Activated CD4-positive, alpha-beta T cell treated with anti-CD3 and anti-CD28 coated beads for 36 hours (primary cell): ENCODE measurements at regions of chr5 and their contacts with region 1.

Region 1: DNA sequence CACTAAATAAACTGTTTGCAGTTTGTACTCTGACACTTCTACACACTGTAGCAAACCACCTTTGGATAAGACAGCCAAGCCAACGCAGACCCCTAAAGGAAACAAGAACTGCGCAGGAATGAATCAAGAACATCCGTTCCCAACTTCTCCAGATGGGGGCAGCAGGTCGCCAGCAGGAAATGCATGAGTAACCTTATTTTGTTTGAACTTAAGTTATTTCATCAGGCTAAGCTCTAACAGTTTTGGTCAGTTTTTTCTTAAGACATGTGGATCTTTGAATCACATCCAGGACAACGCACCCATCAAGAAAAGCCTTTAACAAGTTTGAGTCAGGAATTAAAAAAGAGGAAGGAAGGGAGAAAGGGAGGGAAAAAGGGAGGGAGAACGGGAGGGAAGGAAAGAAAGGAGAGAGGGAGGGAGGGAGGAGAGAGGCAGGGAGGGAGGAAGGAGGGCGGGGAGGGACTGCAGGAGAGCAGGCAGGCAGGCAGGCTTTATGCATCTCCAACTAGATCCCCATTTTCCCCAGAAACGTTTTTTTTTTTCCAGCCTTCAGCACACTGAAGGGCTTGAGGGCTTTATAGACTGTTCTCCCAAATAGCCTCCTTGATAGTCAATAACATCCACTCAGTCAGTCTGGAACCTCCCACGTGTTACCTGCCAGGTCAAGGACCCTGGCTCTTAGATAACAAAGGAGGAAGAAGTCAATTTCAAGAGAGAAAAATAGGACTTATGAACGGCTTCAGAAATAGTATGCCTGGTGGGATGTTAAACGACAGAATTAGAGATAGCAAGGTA is 22.2 kb downstream of the BHMT start:
- DNase-seq: peak; percentile 85
- ATAC-seq: peak; percentile 92
- H3K4me3 Mint-ChIP-seq: peak overlapping the region; percentile 51
- H3K27ac Mint-ChIP-seq: peak overlapping the region; percentile 95
- H3K4me1 Mint-ChIP-seq: peaks cover 15% of the 10 kb centered on the region
- H3K27me3 Mint-ChIP-seq: peaks cover 3% of the 10 kb centered on the region

Region 2: DNA sequence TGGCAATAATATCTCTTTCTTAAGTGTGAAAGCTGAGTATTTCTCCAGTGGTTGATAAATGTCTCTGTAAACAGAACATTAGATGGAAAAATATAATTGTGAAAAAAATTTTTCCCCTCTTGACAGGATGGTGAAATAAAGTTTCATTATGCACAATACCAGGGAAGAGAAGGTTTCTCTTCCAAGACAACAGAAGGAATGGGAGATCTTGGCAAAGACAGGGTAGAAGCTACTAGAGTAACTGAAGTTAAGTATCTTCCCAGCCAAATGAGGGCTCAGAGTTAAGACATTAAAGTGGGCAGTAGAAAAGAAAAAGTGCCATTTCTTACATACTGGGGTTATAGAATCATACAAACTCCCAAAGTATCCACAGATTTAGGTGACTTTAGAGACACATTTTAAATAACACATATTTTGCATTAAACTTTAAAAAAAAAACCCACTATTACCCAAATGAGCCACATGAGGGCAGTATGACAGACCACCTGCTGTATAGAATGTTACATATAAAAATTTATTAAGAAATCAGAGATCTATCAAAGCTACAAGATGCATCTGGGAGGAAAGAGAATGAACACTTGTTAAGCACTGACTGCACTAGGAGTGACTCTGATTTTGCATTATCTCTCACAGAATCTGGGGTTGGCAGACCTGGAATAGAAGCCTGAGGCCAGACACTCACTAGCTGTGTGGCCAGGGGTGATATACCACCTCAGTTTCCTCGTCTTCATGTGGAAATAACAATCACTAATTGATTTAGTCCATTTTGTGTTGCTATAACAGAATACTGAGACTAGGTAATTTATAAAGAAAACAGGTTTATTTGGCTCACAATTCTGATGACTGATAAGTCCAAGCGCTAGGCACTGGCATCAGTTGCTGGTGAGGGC is 247.3 kb before region 1 on chr5:
- CTCF ChIA-PET with region 1: interaction called, 6 read pairs
- POLR2A ChIA-PET with region 1: no interaction called
- intact Hi-C with region 1: loop called (anchors 5 kb)
- DNase-seq: no peak
- ATAC-seq: no peak
- H3K4me3 Mint-ChIP-seq: no peak overlapping the region
- H3K27ac Mint-ChIP-seq: no peak overlapping the region
- H3K4me1 Mint-ChIP-seq: peaks cover 18% of the 10 kb centered on the region
- H3K27me3 Mint-ChIP-seq: no peaks in the 10 kb centered on the region

Region 3: GRCh38 chr5:79020861-79021561 is 112.8 kb before region 1 on chr5:
- CTCF ChIA-PET with region 1: interaction called, 299 read pairs
- POLR2A ChIA-PET with region 1: no interaction called
- intact Hi-C with region 1: loop called (anchors 1 kb)
- DNase-seq: peak; percentile 70
- ATAC-seq: no peak
- H3K4me3 Mint-ChIP-seq: no peak overlapping the region
- H3K27ac Mint-ChIP-seq: no peak overlapping the region
- H3K4me1 Mint-ChIP-seq: peaks cover 2% of the 10 kb centered on the region
- H3K27me3 Mint-ChIP-seq: peaks cover 33% of the 10 kb centered on the region

Region 4: DNA sequence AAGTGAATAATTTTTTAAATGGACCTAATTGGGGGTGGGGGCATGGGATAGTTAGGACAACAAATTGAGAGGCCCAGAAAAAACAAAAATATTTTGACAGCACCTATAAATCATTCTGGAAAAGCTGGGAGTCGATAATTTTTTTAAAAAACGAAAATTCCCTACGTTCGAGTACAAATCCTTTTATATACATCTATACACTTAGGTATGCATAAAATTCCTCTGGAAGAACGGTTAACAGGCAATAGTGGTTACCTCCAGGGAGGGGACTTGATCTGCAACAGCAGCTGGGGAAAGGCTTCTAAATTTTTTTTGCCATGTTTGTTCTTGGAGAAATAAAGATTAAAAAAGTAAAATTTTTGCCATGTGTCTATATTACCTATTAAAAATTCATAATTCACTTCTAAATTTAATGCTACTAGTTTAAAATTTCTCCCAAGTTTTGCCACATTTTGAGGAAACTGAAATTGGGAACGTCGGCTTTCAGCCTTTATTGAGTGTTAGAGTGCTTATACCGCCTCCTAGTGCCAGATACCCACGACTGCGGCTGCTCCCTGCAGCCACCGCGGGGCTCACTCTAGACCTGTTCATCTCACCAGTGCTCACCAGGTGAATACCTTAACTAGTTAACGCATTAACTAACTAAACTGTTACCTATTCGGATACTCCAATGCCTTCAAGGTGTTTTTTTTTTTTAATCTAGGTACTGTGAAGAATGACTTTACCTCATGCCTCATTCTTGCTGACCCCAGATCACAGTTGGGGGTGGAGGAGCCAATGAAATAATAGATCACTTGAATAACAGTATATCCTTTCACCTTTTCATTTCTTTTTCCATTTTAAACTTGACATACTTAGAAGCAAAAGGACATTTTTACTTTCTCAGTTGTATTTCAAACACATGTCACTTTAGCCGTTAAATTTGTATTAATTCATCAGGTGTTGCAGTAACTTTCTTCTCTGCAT is 24.0 kb before region 1 on chr5:
- CTCF ChIA-PET with region 1: interaction called, 11 read pairs
- POLR2A ChIA-PET with region 1: no interaction called
- intact Hi-C with region 1: no loop called
- DNase-seq: peak; percentile 65
- ATAC-seq: peak; percentile 66
- H3K4me3 Mint-ChIP-seq: no peak overlapping the region
- H3K27ac Mint-ChIP-seq: no peak overlapping the region
- H3K4me1 Mint-ChIP-seq: no peaks in the 10 kb centered on the region
- H3K27me3 Mint-ChIP-seq: peaks cover 48% of the 10 kb centered on the region

Region 5: GRCh38 chr5:79157305-79157704 is 23.5 kb after region 1 on chr5:
- CTCF ChIA-PET with region 1: interaction called, 15 read pairs
- POLR2A ChIA-PET with region 1: no interaction called
- intact Hi-C with region 1: no loop called
- DNase-seq: no peak
- ATAC-seq: no peak
- H3K4me3 Mint-ChIP-seq: no peak overlapping the region
- H3K27ac Mint-ChIP-seq: no peak overlapping the region
- H3K4me1 Mint-ChIP-seq: no peaks in the 10 kb centered on the region
- H3K27me3 Mint-ChIP-seq: no peaks in the 10 kb centered on the region

Region 6: GRCh38 chr5:79448336-79448735 is 314.5 kb after region 1 on chr5:
- CTCF ChIA-PET with region 1: interaction called, 11 read pairs
- POLR2A ChIA-PET with region 1: no interaction called
- intact Hi-C with region 1: no loop called
- DNase-seq: no peak
- ATAC-seq: no peak
- H3K4me3 Mint-ChIP-seq: no peak overlapping the region
- H3K27ac Mint-ChIP-seq: no peak overlapping the region
- H3K4me1 Mint-ChIP-seq: no peaks in the 10 kb centered on the region
- H3K27me3 Mint-ChIP-seq: no peaks in the 10 kb centered on the region

Region 7: GRCh38 chr5:79535477-79536192 is 401.8 kb after region 1 on chr5:
- CTCF ChIA-PET with region 1: interaction called, 4 read pairs
- POLR2A ChIA-PET with region 1: no interaction called
- intact Hi-C with region 1: loop called in 1 of 2 experiments (anchors 1 kb)
- DNase-seq: no peak
- ATAC-seq: no peak
- H3K4me3 Mint-ChIP-seq: no peak overlapping the region
- H3K27ac Mint-ChIP-seq: no peak overlapping the region
- H3K4me1 Mint-ChIP-seq: no peaks in the 10 kb centered on the region
- H3K27me3 Mint-ChIP-seq: peaks cover 3% of the 10 kb centered on the region

Region 8: DNA sequence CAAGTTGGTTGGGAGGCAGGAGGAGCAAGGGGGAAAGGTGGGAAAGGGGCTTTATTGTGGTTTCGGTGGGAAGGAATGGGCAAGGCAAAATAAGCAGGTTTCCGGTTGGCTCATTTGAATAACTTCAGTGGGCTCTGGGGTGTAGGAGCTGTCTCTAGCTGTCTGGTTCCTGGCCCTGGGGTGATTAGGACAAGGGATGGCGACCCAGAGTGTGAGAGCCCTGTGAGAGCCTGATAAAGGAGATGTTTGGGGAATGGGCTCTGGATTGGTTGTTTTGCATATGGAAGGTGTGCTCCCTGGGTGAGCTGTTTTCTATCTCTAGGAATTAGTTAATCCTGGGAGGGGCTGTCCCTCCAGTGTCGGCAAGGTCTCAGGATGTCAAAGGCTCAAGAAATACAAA is 1420.8 kb after region 1 on chr5:
- CTCF ChIA-PET with region 1: no interaction called
- POLR2A ChIA-PET with region 1: no interaction called
- intact Hi-C with region 1: no loop called
- DNase-seq: no peak
- ATAC-seq: no peak
- H3K4me3 Mint-ChIP-seq: no peak overlapping the region
- H3K27ac Mint-ChIP-seq: no peak overlapping the region
- H3K4me1 Mint-ChIP-seq: no peaks in the 10 kb centered on the region
- H3K27me3 Mint-ChIP-seq: peaks cover 26% of the 10 kb centered on the region